Ascending aorta (tissue), 2 donors: ENCODE measurements at regions of chr11 and their contacts with region 1.

Region 1: GRCh38 chr11:61129639-61130523 is 27.6 kb downstream of the CD5 start:
- DNase-seq: peak; percentile 38 to 91
- H3K4me3 ChIP-seq: peak overlapping the region; percentile 23 to 24
- H3K27ac ChIP-seq: peak overlapping the region; percentile 37 to 64
- H3K4me1 ChIP-seq: peaks cover 5 to 12% of the 10 kb centered on the region in 2 donors
- H3K27me3 ChIP-seq: no peaks in the 10 kb centered on the region
- CTCF ChIP-seq: peak; percentile 99 to 100 (median 99)

Region 2: GRCh38 chr11:61187505-61188130 is 57.7 kb after region 1 on chr11:
- intact Hi-C with region 1: loop called (anchors 1 kb)
- DNase-seq: peak in 1 of 2 donors; percentile 85
- H3K4me3 ChIP-seq: no peak overlapping the region
- H3K27ac ChIP-seq: no peak overlapping the region
- H3K4me1 ChIP-seq: no peaks in the 10 kb centered on the region
- H3K27me3 ChIP-seq: no peaks in the 10 kb centered on the region
- CTCF ChIP-seq: peak; percentile 76 to 97 (median 86)

Region 3: DNA sequence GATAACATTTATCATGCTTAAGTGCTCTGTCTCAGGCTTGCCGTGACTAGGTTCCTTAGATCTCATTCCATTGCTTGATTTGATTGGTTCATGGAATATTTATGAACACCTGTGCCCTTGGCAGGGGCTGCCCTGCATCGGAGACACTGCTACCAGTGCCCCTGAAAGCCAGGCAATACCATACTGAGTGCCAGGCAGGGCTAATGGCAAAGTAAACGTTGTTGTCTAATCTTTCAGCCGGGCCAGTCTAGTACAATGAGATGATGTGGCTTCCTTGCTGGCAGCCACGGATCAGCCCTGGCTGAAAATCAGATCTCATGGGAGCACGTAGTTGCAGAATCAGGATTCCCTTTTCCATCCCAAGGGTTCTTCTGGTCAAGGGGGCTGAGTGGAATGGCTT is 68.5 kb after region 1 on chr11:
- intact Hi-C with region 1: no loop called
- DNase-seq: no peak
- H3K4me3 ChIP-seq: no peak overlapping the region
- H3K27ac ChIP-seq: no peak overlapping the region
- H3K4me1 ChIP-seq: no peaks in the 10 kb centered on the region
- H3K27me3 ChIP-seq: no peaks in the 10 kb centered on the region
- CTCF ChIP-seq: no peak